ENCODE measurements at regions of chrX and their contacts with region 1.

Region 1: GRCh38 chrX:140928739-140929138 is 73.7 kb upstream of the SPANXB1 start:
- DNase-seq: no peak
- ATAC-seq: no peak
- H3K4me3 ChIP-seq: no peak overlapping the region
- H3K27ac ChIP-seq: no peak overlapping the region
- H3K4me1 ChIP-seq: no peaks in the 10 kb centered on the region
- H3K27me3 ChIP-seq: no peaks in the 10 kb centered on the region

Region 2: GRCh38 chrX:141278302-141278701 is 349.6 kb after region 1 on chrX:
- intact Hi-C with region 1: loop called in 1 of 4 experiments (anchors 10 kb)
- DNase-seq: peak in 1 of 3 donors; percentile 25
- ATAC-seq: peak in 1 of 2 donors; percentile 52
- H3K4me3 ChIP-seq: no peak overlapping the region
- H3K27ac ChIP-seq: no peak overlapping the region
- H3K4me1 ChIP-seq: no peaks in the 10 kb centered on the region
- H3K27me3 ChIP-seq: no peaks in the 10 kb centered on the region

Measured in right cardiac atrium (tissue), 5 donors.